Stomach (tissue), 19 donors: ENCODE measurements at regions of chr17 and their contacts with region 1.

Region 1: DNA sequence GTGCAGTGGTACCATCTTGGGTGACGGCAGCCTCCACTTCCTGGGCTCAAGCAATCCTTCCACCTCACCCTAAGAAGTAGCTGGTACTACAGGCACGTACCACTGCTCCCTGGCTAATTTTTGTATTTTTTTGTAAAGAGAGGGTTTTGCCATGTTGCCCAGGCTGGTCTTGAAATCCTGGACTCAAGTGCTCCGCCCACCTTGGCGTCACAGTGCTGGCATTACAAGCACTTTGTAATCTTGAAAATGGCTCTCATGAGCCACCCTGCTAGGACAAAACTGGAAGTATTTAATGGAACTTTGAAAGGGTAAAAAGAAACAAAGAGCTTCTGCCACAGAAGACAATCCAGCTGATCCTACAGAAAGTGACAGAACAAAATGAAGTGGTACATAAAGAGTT is 9.2 kb downstream of the SUMO2 start:
- DNase-seq: no peak
- H3K4me3 ChIP-seq: no peak overlapping the region
- H3K27ac ChIP-seq: no peak overlapping the region
- H3K4me1 ChIP-seq: peaks cover 0 to 70% (median 21%) of the 10 kb centered on the region in 4 donors
- H3K27me3 ChIP-seq: no peaks in the 10 kb centered on the region
- CTCF ChIP-seq: no peak
- EP300 ChIP-seq: no peak
- POLR2A ChIP-seq: no peak

Region 2: DNA sequence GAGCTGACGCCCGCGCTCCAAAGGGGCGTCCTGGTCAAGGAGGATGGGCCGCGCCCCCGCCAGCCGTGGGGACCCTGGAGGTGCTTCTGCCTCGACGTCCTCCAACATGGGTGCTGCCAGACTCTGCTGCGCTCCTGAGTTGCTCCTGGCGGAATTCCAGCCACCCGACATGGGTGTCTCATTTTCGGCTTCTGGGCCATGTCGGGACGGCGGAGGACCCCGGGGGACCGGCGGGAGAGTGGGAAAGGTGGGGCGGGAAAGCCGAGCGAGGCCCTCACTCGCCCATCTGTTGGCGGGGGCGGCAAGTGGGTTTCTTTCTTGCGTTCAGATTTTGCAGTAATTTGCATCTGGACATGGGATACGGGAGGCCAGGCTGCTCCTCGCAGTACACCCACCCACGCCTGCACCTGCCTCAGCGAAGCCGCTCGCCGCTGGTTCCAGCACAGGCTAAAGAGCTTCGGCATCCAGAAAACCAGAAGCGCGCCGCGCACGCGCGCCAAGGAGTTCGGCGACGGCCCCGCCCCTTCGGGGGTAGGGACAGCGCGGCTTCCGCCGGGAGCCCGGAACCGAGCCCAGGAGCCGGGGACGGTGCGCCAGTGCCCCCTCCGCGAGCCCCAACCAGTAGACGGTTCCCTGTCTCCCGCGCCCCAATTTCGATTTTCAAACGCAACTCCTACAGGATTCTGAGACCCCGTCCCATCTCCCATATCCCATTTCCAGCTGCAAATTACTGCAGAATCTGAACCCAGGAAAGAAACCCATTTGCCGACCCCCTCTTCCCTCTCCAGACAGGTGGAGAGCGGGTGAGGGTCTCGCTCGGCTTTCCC is 63.9 kb before region 1 on chr17 and contains the start of gene ARMC7:
- intact Hi-C with region 1: loop called (anchors 10 kb)
- DNase-seq: peak; percentile 95 to 96
- H3K4me3 ChIP-seq: peak within 1 kb of the TSS; percentile 78 to 81 (median 80)
- H3K27ac ChIP-seq: peak within 1 kb of the TSS; percentile 84 to 91 (median 86)
- H3K4me1 ChIP-seq: peaks cover 24 to 80% (median 48%) of the 10 kb centered on the region in 4 donors
- H3K27me3 ChIP-seq: no peaks in the 10 kb centered on the region
- CTCF ChIP-seq: no peak
- EP300 ChIP-seq: no peak
- POLR2A ChIP-seq: peak in 1 of 4 donors; percentile 61
- total RNA-seq, gene ARMC7: 2.2 to 26.8 (median 13.9) TPM

Region 3: GRCh38 chr17:75209061-75209460 is 35.5 kb after region 1 on chr17:
- intact Hi-C with region 1: loop called (anchors 2 kb)
- DNase-seq: no peak
- H3K4me3 ChIP-seq: no peak overlapping the region
- H3K27ac ChIP-seq: no peak overlapping the region
- H3K4me1 ChIP-seq: peaks cover 14 to 33% (median 32%) of the 10 kb centered on the region in 4 donors
- H3K27me3 ChIP-seq: no peaks in the 10 kb centered on the region
- CTCF ChIP-seq: no peak
- EP300 ChIP-seq: no peak
- POLR2A ChIP-seq: no peak